Cardiac septum (tissue), 1 donor: ENCODE measurements at regions of chr2 and their contacts with region 1.

Region 1: GRCh38 chr2:11746376-11746806 is at the start of gene LPIN1:
- DNase-seq: peak; percentile 94
- total RNA-seq, gene LPIN1: 27.8 TPM

Region 2: DNA sequence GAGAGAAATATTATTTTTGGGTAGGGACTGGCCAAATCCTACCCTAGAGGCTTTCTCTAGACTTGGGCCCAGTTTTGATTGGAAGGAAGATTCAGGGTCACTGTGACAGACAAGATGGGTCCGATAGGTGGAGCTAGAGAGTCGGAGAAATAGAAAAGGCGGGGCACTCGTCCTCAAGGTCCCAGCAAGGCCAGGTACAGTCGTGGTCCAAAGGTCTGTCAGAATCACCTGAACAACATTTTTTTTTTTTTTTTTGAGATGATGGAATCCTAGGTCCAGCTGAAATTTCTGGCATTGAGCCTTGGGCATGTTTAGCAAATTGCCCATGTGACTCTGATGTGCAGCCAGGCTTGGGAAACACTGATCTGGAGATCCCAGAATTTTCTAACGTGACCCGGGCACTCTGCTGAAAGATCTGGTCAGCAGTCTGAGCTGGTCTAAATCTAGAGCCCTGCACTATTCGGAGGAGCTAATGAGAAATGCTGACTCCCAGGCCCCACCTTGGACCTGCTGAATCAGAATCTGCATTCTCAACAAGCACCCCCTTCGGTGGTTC is 53.3 kb before region 1 on chr2:
- intact Hi-C with region 1: loop called (anchors 5 kb)
- DNase-seq: no peak